ENCODE measurements at regions of chr1 and their contacts with region 1.

Region 1: GRCh38 chr1:65309304-65310077 is at the start of gene DNAJC6:
- DNase-seq: no peak
- H3K4me3 ChIP-seq: no peak within 1 kb of the TSS
- H3K27ac ChIP-seq: no peak within 1 kb of the TSS
- H3K4me1 ChIP-seq: no peaks in the 10 kb centered on the region
- CTCF ChIP-seq: no peak
- total RNA-seq, gene DNAJC6: 6.6 and 10.3 TPM in 2 replicates

Region 2: DNA sequence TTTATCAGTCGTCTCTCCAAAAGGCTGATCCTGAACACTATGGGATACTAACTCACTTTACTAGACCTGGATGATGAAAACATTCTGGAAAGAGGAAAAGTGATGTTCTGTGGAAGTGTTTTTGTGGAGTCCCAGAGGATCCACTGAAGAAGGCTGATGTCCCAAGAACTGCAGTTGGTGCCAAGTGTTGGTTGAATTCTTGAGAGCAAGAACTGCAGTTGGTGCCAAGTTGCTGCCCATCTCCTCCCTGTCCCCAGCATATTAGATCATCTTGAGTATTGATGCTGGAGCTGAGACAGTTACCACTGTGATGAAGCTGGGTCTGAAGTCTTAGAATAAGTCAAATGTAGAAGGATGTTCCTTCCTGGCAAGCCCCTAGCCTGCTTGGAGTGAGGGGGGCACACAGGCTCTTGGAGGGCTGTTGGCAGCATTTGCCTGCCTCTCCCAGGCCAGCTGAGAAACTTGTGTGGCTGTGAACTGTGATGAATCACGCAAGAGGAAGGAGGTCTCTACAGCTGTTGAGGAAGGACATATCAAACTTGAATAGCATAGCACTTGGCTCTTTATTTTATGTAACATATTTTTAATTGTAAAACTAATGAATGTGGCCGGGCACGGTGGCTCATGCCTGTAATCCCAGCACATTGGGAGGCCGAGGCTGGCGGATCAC is 47.9 kb after region 1 on chr1:
- CTCF ChIA-PET with region 1: no interaction called
- POLR2A ChIA-PET with region 1: interaction called, 3 read pairs
- intact Hi-C with region 1: loop called (anchors 5 kb)
- DNase-seq: no peak
- H3K4me3 ChIP-seq: no peak overlapping the region
- H3K27ac ChIP-seq: no peak overlapping the region
- H3K4me1 ChIP-seq: no peaks in the 10 kb centered on the region
- CTCF ChIP-seq: no peak

Region 3: DNA sequence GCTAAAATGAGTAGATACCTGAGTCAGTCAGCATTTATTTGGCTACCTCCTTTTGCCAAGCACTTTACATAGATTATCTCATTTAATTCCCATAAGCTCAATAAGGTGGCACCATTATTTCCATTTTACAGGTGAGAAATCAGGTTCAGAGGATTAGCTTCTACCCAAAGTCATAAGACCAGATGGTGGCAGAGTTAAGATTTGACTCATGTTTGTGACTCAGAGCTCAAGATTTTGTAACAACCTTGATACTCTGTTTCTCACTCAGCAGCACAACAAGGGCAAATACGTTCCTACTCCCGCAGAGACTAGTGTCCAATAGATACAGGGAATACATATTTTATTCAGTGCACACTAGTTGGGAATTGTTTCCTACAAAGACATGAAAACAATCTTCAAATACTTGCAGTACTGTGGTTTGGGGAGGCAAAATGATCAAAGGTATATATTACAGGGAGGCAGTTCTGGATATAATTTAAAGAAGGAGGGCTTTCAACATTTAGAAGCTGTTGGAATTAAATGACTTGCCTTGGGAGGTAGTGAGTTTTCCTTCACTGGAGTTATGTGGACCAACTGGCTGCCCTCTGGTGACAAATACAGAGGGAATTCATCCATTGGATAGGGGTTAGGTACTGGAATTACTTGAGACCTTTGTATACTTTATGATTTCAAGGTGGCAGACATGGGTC is 114.5 kb after region 1 on chr1:
- CTCF ChIA-PET with region 1: no interaction called
- POLR2A ChIA-PET with region 1: no interaction called
- intact Hi-C with region 1: no loop called
- DNase-seq: no peak
- H3K4me3 ChIP-seq: no peak overlapping the region
- H3K27ac ChIP-seq: no peak overlapping the region
- H3K4me1 ChIP-seq: peaks cover 16% of the 10 kb centered on the region
- CTCF ChIP-seq: no peak

Measured in OCI-LY7 (cell line).